HEK293 (cell line): ENCODE measurements at regions of chr19 and their contacts with region 1.

Region 1: DNA sequence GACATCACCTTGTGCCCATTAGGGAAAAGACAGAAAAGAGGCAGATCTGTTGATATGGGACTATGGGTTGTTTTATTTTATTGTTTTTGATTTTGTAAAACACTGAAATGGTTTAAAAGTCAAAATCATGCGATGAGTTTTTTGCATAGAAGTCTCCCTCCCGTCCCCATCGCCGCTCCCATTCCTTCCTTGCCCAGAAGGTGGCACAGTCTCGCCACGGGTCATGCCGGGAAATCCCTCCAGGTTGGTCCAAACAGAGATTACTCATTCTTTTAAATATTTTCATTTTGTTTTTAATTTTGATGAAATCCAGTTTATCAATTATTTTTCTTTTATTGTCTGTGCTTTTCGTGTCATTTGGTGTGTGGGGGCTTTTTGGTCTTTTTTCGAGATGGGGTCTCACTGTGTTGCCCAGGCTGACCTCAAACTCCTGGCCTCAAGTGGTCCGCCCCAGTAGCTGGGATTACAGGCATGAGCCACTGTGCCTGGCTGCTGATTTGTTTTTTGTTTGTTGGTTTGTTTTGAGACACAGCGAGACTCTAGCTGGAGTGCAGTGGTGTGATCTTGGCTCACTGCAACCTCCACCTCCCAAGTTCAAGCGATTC is 9.2 kb downstream of the PGPEP1 start:
- H3K4me3 ChIP-seq: no peak overlapping the region
- H3K27ac ChIP-seq: no peak overlapping the region
- H3K4me1 ChIP-seq: no peaks in the 10 kb centered on the region
- CTCF ChIP-seq: peak; percentile 68

Region 2: DNA sequence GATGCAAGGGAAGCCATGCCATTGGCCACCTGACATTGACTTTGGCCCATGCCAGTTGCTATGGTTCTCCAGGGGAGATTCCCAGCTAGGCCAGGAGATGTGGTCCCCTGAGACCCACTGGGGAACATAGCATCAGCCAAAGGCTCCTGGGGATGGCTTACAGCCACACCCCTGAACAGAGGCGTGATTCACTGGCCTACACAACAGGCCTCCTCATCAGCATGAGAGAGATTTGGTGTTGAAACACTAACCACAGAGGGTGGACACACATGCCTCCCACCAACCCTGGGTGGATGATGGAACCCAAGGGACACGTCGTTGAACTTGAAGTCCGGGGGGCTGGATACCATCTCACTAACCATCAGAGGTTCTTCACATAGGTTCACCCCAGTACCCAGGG is 89.7 kb before region 1 on chr19:
- CTCF ChIA-PET with region 1: no interaction called
- POLR2A ChIA-PET with region 1: no interaction called
- H3K4me3 ChIP-seq: no peak overlapping the region
- H3K27ac ChIP-seq: no peak overlapping the region
- H3K4me1 ChIP-seq: no peaks in the 10 kb centered on the region
- CTCF ChIP-seq: no peak

Region 3: GRCh38 chr19:18364826-18365528 is 15.4 kb after region 1 on chr19:
- CTCF ChIA-PET with region 1: interaction called, 27 read pairs
- POLR2A ChIA-PET with region 1: no interaction called
- H3K4me3 ChIP-seq: no peak overlapping the region
- H3K27ac ChIP-seq: peak overlapping the region; percentile 94
- H3K4me1 ChIP-seq: no peaks in the 10 kb centered on the region; the same call in 1 of the 2 replicates
- CTCF ChIP-seq: no peak

Region 4: GRCh38 chr19:18419195-18419698 is 69.6 kb after region 1 on chr19 and contains the start of gene SSBP4:
- CTCF ChIA-PET with region 1: interaction called, 117 read pairs
- POLR2A ChIA-PET with region 1: no interaction called
- H3K4me3 ChIP-seq: peak within 1 kb of the TSS; percentile 53
- H3K27ac ChIP-seq: peak within 1 kb of the TSS; percentile 63; the same call in 1 of the 2 replicates
- H3K4me1 ChIP-seq: peaks cover 9% of the 10 kb centered on the region; the same call in 1 of the 2 replicates
- CTCF ChIP-seq: no peak